ENCODE measurements at regions of chr16 and their contacts with region 1.

Region 1: GRCh38 chr16:10876799-10877341 is at the start of gene CIITA:
- DNase-seq: peak; percentile 93
- ATAC-seq: peak; percentile 70
- H3K4me3 ChIP-seq: peak within 1 kb of the TSS; percentile 77 to 97 (median 91)
- H3K4me3 Mint-ChIP-seq: peak within 1 kb of the TSS; percentile 100
- H3K27ac ChIP-seq: peak within 1 kb of the TSS; percentile 86 to 88
- H3K27ac Mint-ChIP-seq: peak within 1 kb of the TSS; percentile 92
- H3K4me1 ChIP-seq: peaks cover 57 to 73% of the 10 kb centered on the region in 2 donors
- H3K4me1 Mint-ChIP-seq: peaks cover 61% of the 10 kb centered on the region
- H3K27me3 ChIP-seq: no peaks in the 10 kb centered on the region
- H3K27me3 Mint-ChIP-seq: no peaks in the 10 kb centered on the region
- CTCF ChIP-seq: no peak
- total RNA-seq, gene CIITA: 719 and 738 TPM in 2 replicates

Region 2: DNA sequence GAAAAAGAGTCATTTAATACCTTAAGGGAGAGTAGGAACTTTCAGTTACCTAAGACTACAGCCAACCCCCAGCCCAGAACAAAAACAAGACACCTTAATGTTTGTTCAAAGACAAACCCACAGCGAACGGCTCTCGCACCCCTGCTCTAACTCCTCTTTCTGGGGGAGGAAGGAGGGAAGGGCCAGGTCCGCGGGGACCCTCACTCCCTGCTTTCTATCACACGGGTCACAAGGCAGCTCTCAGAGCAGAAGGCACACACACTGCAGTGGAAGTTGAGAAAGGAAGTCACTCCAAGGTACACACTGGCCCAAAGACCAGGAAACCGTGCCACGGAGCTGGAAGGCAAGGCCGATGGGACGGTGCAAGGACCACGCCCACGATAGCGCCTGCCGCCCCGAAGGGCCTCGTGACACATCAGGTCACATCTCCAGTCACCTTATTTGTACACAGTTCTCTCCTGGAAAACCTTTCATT is 1984.7 kb before region 1 on chr16:
- CTCF ChIA-PET with region 1: no interaction called
- POLR2A ChIA-PET with region 1: no interaction called
- intact Hi-C with region 1: loop called (anchors 5 kb)
- DNase-seq: peak; percentile 53
- ATAC-seq: no peak
- H3K4me3 ChIP-seq: no peak overlapping the region
- H3K4me3 Mint-ChIP-seq: peak overlapping the region; percentile 68
- H3K27ac ChIP-seq: peak overlapping the region; percentile 41 to 86
- H3K27ac Mint-ChIP-seq: peak overlapping the region; percentile 95
- H3K4me1 ChIP-seq: peaks cover 18 to 40% of the 10 kb centered on the region in 2 donors
- H3K4me1 Mint-ChIP-seq: peaks cover 36% of the 10 kb centered on the region
- H3K27me3 ChIP-seq: no peaks in the 10 kb centered on the region
- H3K27me3 Mint-ChIP-seq: no peaks in the 10 kb centered on the region
- CTCF ChIP-seq: no peak

Region 3: DNA sequence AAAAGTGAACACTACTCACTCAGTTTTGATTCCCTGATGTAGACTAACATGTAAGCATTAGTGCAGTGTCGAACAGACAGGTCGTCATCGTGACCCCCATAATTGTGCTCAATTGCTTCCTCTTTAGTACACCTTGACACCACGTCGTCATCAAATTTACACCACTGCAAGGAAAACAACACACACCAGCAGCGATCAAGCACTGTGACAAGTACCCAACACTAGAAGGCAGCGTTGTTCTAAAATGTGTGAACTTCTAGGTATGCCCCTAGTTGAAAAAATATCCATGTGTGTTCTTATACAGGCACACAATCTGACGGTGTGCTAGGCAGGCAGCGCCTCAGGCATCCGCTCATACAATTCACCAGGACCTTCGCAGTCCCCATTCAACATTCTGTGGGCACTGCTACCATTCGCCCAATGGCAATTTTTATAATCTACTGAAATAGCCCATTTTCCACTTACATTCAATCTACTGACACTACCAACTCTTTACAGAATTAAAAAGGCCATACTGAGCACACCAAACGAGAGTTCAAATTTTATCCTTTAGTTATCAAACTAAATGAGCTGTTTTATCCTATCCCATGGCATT is 1971.6 kb before region 1 on chr16:
- CTCF ChIA-PET with region 1: no interaction called
- POLR2A ChIA-PET with region 1: no interaction called
- intact Hi-C with region 1: no loop called
- DNase-seq: no peak
- ATAC-seq: peak; percentile 47
- H3K4me3 ChIP-seq: no peak overlapping the region
- H3K4me3 Mint-ChIP-seq: no peak overlapping the region
- H3K27ac ChIP-seq: no peak overlapping the region
- H3K27ac Mint-ChIP-seq: peak overlapping the region; percentile 50
- H3K4me1 ChIP-seq: no peaks in the 10 kb centered on the region
- H3K4me1 Mint-ChIP-seq: no peaks in the 10 kb centered on the region
- H3K27me3 ChIP-seq: no peaks in the 10 kb centered on the region
- H3K27me3 Mint-ChIP-seq: no peaks in the 10 kb centered on the region
- CTCF ChIP-seq: peak; percentile 23

Region 4: GRCh38 chr16:10737068-10737625 is 139.7 kb before region 1 on chr16:
- CTCF ChIA-PET with region 1: interaction called, 24 read pairs
- POLR2A ChIA-PET with region 1: interaction called, 12 read pairs
- intact Hi-C with region 1: no loop called
- DNase-seq: peak; percentile 87
- ATAC-seq: peak; percentile 84
- H3K4me3 ChIP-seq: peak overlapping the region in 4 of 5 experiments; percentile 29 to 68 (median 46)
- H3K4me3 Mint-ChIP-seq: peak overlapping the region; percentile 80
- H3K27ac ChIP-seq: peak overlapping the region; percentile 63 to 70
- H3K27ac Mint-ChIP-seq: peak overlapping the region; percentile 85
- H3K4me1 ChIP-seq: peaks cover 23 to 29% of the 10 kb centered on the region in 2 donors
- H3K4me1 Mint-ChIP-seq: peaks cover 44% of the 10 kb centered on the region
- H3K27me3 ChIP-seq: no peaks in the 10 kb centered on the region
- H3K27me3 Mint-ChIP-seq: no peaks in the 10 kb centered on the region
- CTCF ChIP-seq: peak; percentile 96

Region 5: GRCh38 chr16:10765772-10766171 is 111.1 kb before region 1 on chr16:
- CTCF ChIA-PET with region 1: interaction called, 7 read pairs
- POLR2A ChIA-PET with region 1: no interaction called
- intact Hi-C with region 1: loop called (anchors 1 kb)
- DNase-seq: peak; percentile 65
- ATAC-seq: peak; percentile 94
- H3K4me3 ChIP-seq: peak overlapping the region in 1 of 5 experiments; percentile 27
- H3K4me3 Mint-ChIP-seq: peak overlapping the region; percentile 60
- H3K27ac ChIP-seq: peak overlapping the region in 1 of 2 donors; percentile 69
- H3K27ac Mint-ChIP-seq: peak overlapping the region; percentile 83
- H3K4me1 ChIP-seq: peaks cover 17 to 26% of the 10 kb centered on the region in 2 donors
- H3K4me1 Mint-ChIP-seq: peaks cover 36% of the 10 kb centered on the region
- H3K27me3 ChIP-seq: no peaks in the 10 kb centered on the region
- H3K27me3 Mint-ChIP-seq: no peaks in the 10 kb centered on the region
- CTCF ChIP-seq: no peak

Region 6: DNA sequence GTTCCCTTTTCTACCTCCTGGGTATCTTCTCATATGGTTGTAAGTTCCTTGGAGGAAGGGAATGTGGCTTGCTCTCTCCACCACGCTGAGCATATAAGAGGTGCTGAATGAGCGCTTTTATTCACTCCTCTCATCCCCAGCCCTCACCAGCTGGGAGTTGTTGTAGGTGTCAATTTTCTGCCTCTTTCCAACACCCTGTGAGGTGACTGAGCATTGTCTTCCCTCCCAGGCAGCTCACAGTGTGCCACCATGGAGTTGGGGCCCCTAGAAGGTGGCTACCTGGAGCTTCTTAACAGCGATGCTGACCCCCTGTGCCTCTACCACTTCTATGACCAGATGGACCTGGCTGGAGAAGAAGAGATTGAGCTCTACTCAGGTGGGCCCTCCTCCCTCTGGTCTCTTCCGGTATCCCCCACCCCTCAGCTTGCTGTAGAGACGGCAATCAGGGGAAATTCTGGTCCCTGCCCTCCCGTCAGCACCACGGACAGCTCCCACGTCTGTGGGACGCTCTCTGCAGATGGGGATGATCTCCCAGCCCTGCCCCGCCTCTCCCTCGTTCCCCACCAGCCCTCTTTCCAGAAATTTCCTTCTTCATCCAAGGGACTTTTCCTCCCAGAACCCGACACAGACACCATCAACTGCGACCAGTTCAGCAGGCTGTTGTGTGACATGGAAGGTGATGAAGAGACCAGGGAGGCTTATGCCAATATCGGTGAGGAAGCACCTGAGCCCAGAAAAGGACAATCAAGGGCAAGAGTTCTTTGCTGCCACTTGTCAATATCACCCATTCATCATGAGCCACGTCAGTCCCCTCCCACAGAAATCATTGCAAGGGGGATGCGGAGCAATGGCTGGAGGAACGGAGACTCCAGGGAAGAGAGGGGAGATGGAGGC is 18.4 kb after region 1 on chr16:
- CTCF ChIA-PET with region 1: interaction called, 120 read pairs
- POLR2A ChIA-PET with region 1: interaction called, 122 read pairs
- intact Hi-C with region 1: loop called (anchors 1 kb)
- DNase-seq: peak; percentile 72
- ATAC-seq: no peak
- H3K4me3 ChIP-seq: no peak overlapping the region
- H3K4me3 Mint-ChIP-seq: peak overlapping the region; percentile 78
- H3K27ac ChIP-seq: peak overlapping the region; percentile 68 to 77
- H3K27ac Mint-ChIP-seq: peak overlapping the region; percentile 92
- H3K4me1 ChIP-seq: peaks cover 88 to 93% of the 10 kb centered on the region in 2 donors
- H3K4me1 Mint-ChIP-seq: peaks cover 93% of the 10 kb centered on the region
- H3K27me3 ChIP-seq: no peaks in the 10 kb centered on the region
- H3K27me3 Mint-ChIP-seq: no peaks in the 10 kb centered on the region
- CTCF ChIP-seq: no peak

Region 7: DNA sequence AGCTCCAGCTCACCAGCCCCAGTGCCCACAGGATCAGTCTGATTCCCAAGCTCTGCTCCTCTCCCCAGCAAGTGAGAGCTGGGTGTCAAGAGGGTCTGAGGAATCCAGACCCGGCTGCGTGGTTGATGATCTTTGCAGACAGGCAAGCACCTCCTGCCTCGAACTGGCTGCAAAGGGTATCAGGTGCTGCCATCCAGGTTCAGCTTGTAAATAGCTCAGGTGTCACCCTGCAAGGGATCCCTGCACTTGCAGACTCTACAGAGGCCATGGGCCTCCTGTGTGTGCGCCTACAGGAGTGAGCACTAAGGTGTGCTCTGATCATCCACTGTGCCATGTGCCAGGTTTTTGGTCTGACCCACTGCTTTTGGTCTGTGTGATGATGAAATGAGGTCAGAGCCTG is 49.2 kb after region 1 on chr16:
- CTCF ChIA-PET with region 1: interaction called, 12 read pairs
- POLR2A ChIA-PET with region 1: interaction called, 4 read pairs
- intact Hi-C with region 1: no loop called
- DNase-seq: no peak
- ATAC-seq: no peak
- H3K4me3 ChIP-seq: no peak overlapping the region
- H3K4me3 Mint-ChIP-seq: no peak overlapping the region
- H3K27ac ChIP-seq: no peak overlapping the region
- H3K27ac Mint-ChIP-seq: peak overlapping the region; percentile 41
- H3K4me1 ChIP-seq: peaks cover 11 to 40% of the 10 kb centered on the region in 2 donors
- H3K4me1 Mint-ChIP-seq: peaks cover 41% of the 10 kb centered on the region
- H3K27me3 ChIP-seq: no peaks in the 10 kb centered on the region
- H3K27me3 Mint-ChIP-seq: no peaks in the 10 kb centered on the region
- CTCF ChIP-seq: no peak

Measured in B cell (primary cell).